ENCODE measurements at regions of chr9 and their contacts with region 1.

Region 1: DNA sequence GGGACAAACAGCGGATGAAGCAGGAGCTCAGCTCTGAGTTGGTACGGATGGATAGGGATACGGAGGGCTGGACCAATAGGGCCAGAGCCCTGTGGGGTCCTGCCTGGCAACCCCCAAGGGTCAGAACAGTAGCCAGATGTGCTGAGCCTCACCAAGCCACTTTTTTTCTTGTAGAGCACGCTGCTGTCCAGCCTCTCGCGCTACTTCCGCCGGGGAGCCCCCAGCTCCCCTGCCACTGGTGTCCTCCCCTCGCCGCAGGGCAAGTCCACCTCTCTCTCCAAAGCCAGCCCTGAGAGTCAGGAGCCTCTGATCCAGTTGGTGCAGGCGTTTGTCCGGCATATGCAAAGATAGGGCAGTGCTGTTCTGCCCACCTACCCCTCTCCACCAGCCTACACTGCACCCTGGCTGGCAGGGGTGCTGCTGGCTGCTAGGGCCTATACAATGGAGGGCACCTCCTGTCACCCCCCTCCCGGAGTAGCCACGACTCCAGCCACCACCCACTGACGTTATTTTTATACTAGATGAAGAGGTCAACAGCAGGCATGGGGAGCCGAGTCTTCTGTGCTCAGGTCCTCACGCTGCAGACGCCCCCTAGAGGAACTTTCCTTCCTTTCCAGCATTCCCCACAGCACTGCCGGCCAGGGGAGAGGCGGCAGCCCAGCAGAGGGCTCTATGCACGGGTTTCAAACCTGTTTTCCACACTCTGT is 21.6 kb downstream of the SH3GLB2 start:
- DNase-seq: peak; percentile 73
- H3K4me3 Mint-ChIP-seq: no peak overlapping the region
- H3K27ac Mint-ChIP-seq: no peak overlapping the region
- H3K4me1 Mint-ChIP-seq: no peaks in the 10 kb centered on the region
- H3K27me3 Mint-ChIP-seq: no peaks in the 10 kb centered on the region
- CTCF ChIP-seq: peak; percentile 76

Region 2: GRCh38 chr9:128829477-128830251 is 176.8 kb before region 1 on chr9 and contains the start of gene SPOUT1:
- CTCF ChIA-PET with region 1: no interaction called
- POLR2A ChIA-PET with region 1: no interaction called
- intact Hi-C with region 1: no loop called
- DNase-seq: peak; percentile 95
- H3K4me3 Mint-ChIP-seq: peak within 1 kb of the TSS; percentile 97
- H3K27ac Mint-ChIP-seq: peak within 1 kb of the TSS; percentile 94
- H3K4me1 Mint-ChIP-seq: peaks cover 15% of the 10 kb centered on the region
- H3K27me3 Mint-ChIP-seq: no peaks in the 10 kb centered on the region
- CTCF ChIP-seq: no peak
- total RNA-seq, gene SPOUT1: 30.1 and 32.4 TPM in 2 replicates

Region 3: GRCh38 chr9:128845155-128845931 is 161.1 kb before region 1 on chr9:
- CTCF ChIA-PET with region 1: interaction called, 4 read pairs
- POLR2A ChIA-PET with region 1: no interaction called
- intact Hi-C with region 1: loop called (anchors 5 kb)
- DNase-seq: peak; percentile 55
- H3K4me3 Mint-ChIP-seq: no peak overlapping the region
- H3K27ac Mint-ChIP-seq: no peak overlapping the region
- H3K4me1 Mint-ChIP-seq: peaks cover 9% of the 10 kb centered on the region
- H3K27me3 Mint-ChIP-seq: no peaks in the 10 kb centered on the region
- CTCF ChIP-seq: no peak

Region 4: DNA sequence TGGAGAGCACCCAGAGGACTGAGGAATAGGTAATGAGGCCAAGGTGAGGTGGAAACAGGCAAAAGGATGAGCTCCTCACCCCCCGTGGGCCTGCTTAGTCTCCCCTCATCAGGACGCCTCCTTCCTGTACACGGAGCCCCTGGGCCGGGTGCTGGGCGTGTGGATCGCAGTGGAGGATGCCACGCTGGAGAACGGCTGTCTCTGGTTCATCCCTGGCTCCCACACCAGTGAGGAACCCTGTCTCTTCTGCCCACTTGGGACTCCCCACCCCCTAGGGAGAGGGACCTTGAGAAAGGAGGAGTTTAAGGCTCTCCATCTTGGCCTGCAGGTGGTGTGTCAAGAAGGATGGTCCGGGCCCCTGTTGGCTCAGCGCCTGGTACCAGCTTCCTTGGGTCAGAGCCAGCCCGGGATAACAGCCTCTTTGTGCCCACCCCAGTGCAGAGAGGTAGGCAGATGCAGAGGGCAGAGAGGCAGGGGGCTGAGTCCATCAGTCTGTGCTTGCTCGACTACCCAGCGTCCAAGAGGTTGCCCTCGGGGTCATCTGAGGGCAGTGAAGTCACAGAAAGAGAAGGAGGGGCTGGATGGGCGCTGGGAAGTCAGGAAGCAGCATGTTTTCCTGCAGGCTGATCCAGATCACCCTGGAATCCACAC is 66.1 kb before region 1 on chr9:
- CTCF ChIA-PET with region 1: no interaction called
- POLR2A ChIA-PET with region 1: no interaction called
- intact Hi-C with region 1: no loop called
- DNase-seq: no peak
- H3K4me3 Mint-ChIP-seq: no peak overlapping the region
- H3K27ac Mint-ChIP-seq: no peak overlapping the region
- H3K4me1 Mint-ChIP-seq: no peaks in the 10 kb centered on the region
- H3K27me3 Mint-ChIP-seq: no peaks in the 10 kb centered on the region
- CTCF ChIP-seq: no peak

Region 5: GRCh38 chr9:128992995-128993394 is 13.5 kb before region 1 on chr9:
- CTCF ChIA-PET with region 1: interaction called, 22 read pairs
- POLR2A ChIA-PET with region 1: interaction called, 9 read pairs
- intact Hi-C with region 1: no loop called
- DNase-seq: no peak
- H3K4me3 Mint-ChIP-seq: no peak overlapping the region
- H3K27ac Mint-ChIP-seq: no peak overlapping the region
- H3K4me1 Mint-ChIP-seq: peaks cover 3% of the 10 kb centered on the region
- H3K27me3 Mint-ChIP-seq: no peaks in the 10 kb centered on the region
- CTCF ChIP-seq: peak; percentile 29

Region 6: GRCh38 chr9:129023036-129023907 is 16.8 kb after region 1 on chr9:
- CTCF ChIA-PET with region 1: interaction called, 11 read pairs
- POLR2A ChIA-PET with region 1: no interaction called
- intact Hi-C with region 1: no loop called
- DNase-seq: peak; percentile 65
- H3K4me3 Mint-ChIP-seq: no peak overlapping the region
- H3K27ac Mint-ChIP-seq: no peak overlapping the region
- H3K4me1 Mint-ChIP-seq: peaks cover 20% of the 10 kb centered on the region
- H3K27me3 Mint-ChIP-seq: no peaks in the 10 kb centered on the region
- CTCF ChIP-seq: no peak